ENCODE measurements at regions of chr12 and their contacts with region 1.

Region 1: GRCh38 chr12:101939856-101940265 is 62.5 kb downstream of the DRAM1 start:
- DNase-seq: peak; percentile 76
- H3K4me3 ChIP-seq: no peak overlapping the region
- H3K27ac ChIP-seq: no peak overlapping the region
- H3K4me1 ChIP-seq: peaks cover 22% of the 10 kb centered on the region
- H3K27me3 ChIP-seq: no peaks in the 10 kb centered on the region
- CTCF ChIP-seq: peak; percentile 64 to 66
- POLR2A ChIP-seq: no peak

Region 2: GRCh38 chr12:101414533-101415119 is 525.2 kb before region 1 on chr12:
- CTCF ChIA-PET with region 1: no interaction called
- POLR2A ChIA-PET with region 1: no interaction called
- dilution Hi-C with region 1: no loop called
- intact Hi-C with region 1: loop called (anchors 1 kb)
- DNase-seq: peak; percentile 76
- H3K4me3 ChIP-seq: no peak overlapping the region
- H3K27ac ChIP-seq: no peak overlapping the region
- H3K4me1 ChIP-seq: no peaks in the 10 kb centered on the region
- H3K27me3 ChIP-seq: peaks cover 0 to 4% of the 10 kb centered on the region in 2 experiments
- CTCF ChIP-seq: peak; percentile 30 to 39
- POLR2A ChIP-seq: no peak

Region 3: GRCh38 chr12:102061560-102062418 is 121.9 kb after region 1 on chr12 and contains the start of gene WASHC3:
- CTCF ChIA-PET with region 1: interaction called, 4 read pairs
- POLR2A ChIA-PET with region 1: no interaction called
- dilution Hi-C with region 1: no loop called
- intact Hi-C with region 1: loop called (anchors 2 kb)
- DNase-seq: peak; percentile 93
- H3K4me3 ChIP-seq: peak within 1 kb of the TSS; percentile 66 to 94 (median 85)
- H3K27ac ChIP-seq: peak within 1 kb of the TSS; percentile 68
- H3K4me1 ChIP-seq: peaks cover 6% of the 10 kb centered on the region
- H3K27me3 ChIP-seq: no peaks in the 10 kb centered on the region
- CTCF ChIP-seq: no peak
- POLR2A ChIP-seq: peak; percentile 87
- total RNA-seq, gene WASHC3: 26.1 and 27.8 TPM in 2 replicates

Region 4: GRCh38 chr12:102169922-102170621 is 230.2 kb after region 1 on chr12:
- CTCF ChIA-PET with region 1: no interaction called
- POLR2A ChIA-PET with region 1: no interaction called
- dilution Hi-C with region 1: no loop called
- intact Hi-C with region 1: loop called (anchors 2 kb)
- DNase-seq: peak; percentile 69
- H3K4me3 ChIP-seq: no peak overlapping the region
- H3K27ac ChIP-seq: no peak overlapping the region
- H3K4me1 ChIP-seq: peaks cover 26% of the 10 kb centered on the region
- H3K27me3 ChIP-seq: no peaks in the 10 kb centered on the region
- CTCF ChIP-seq: peak; percentile 62 to 64
- POLR2A ChIP-seq: no peak

Region 5: DNA sequence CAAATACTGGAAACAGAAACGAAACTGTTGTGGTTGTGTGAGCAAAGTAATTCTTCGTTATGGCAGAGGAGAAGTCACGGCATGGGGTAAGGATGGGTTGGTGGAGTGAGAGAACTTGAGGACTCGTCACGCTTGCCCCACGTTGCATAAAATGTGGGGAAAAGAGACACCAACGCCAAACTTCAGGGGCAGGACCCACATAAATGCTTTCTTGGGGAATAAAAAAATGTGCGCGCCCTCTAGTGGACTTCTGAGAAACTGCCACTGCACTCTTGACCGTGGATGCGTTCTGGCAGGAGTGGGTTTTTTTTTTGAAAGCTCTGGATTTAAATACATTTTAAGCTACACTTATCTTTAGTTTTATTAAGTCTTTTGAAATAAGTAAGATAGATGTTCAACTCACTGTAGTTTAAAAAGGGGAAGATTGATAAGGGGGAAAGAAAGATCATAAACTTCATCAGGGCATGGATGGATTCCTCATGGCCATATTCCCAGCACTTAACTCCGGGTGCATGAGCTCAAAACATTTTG is 544.6 kb after region 1 on chr12:
- CTCF ChIA-PET with region 1: interaction called, 50 read pairs
- POLR2A ChIA-PET with region 1: no interaction called
- dilution Hi-C with region 1: no loop called
- intact Hi-C with region 1: loop called (anchors 1 kb)
- DNase-seq: peak; percentile 65
- H3K4me3 ChIP-seq: peak overlapping the region in 1 of 3 experiments; percentile 35
- H3K27ac ChIP-seq: no peak overlapping the region
- H3K4me1 ChIP-seq: peaks cover 12% of the 10 kb centered on the region
- H3K27me3 ChIP-seq: no peaks in the 10 kb centered on the region
- CTCF ChIP-seq: peak; percentile 83 to 89
- POLR2A ChIP-seq: no peak

Region 6: GRCh38 chr12:102740141-102740955 is 800.5 kb after region 1 on chr12:
- CTCF ChIA-PET with region 1: no interaction called
- POLR2A ChIA-PET with region 1: no interaction called
- dilution Hi-C with region 1: no loop called
- intact Hi-C with region 1: loop called (anchors 1 kb)
- DNase-seq: no peak
- H3K4me3 ChIP-seq: no peak overlapping the region
- H3K27ac ChIP-seq: no peak overlapping the region
- H3K4me1 ChIP-seq: no peaks in the 10 kb centered on the region
- H3K27me3 ChIP-seq: no peaks in the 10 kb centered on the region
- CTCF ChIP-seq: no peak
- POLR2A ChIP-seq: no peak

Region 7: DNA sequence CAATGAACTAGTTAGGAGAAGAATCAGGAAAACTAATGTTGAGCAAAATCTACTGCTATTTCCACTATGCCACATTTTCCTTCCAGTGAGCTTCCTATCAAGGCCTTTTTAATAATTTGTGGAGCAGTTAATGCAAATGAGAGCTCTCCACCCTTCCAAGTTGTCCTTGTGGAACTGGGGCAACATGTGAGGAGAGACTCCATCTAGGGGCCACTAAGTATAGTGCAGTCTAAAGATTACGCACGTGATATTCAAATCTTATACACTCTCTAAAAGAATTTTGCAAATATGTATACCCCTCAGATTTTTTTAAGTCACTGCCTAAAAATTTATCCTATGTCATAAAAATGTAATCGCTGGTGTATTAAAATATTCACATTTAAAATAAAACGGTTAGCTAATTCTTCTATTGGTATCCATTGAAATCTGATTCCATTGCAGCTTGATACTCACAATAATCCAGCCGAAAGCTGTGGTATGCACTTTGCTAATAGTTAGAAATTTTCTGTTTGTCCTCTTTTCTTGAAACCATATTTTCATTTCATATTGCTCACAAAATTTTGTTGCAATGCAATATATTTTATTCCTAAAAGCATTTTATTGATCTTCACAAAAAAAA is 877.1 kb after region 1 on chr12:
- CTCF ChIA-PET with region 1: interaction called, 6 read pairs
- POLR2A ChIA-PET with region 1: no interaction called
- dilution Hi-C with region 1: no loop called
- intact Hi-C with region 1: loop called (anchors 2 kb)
- DNase-seq: peak; percentile 3
- H3K4me3 ChIP-seq: no peak overlapping the region
- H3K27ac ChIP-seq: no peak overlapping the region
- H3K4me1 ChIP-seq: no peaks in the 10 kb centered on the region
- H3K27me3 ChIP-seq: no peaks in the 10 kb centered on the region
- CTCF ChIP-seq: peak; percentile 31 to 53
- POLR2A ChIP-seq: no peak